ENCODE measurements at regions of chr3 and their contacts with region 1.

Region 1: DNA sequence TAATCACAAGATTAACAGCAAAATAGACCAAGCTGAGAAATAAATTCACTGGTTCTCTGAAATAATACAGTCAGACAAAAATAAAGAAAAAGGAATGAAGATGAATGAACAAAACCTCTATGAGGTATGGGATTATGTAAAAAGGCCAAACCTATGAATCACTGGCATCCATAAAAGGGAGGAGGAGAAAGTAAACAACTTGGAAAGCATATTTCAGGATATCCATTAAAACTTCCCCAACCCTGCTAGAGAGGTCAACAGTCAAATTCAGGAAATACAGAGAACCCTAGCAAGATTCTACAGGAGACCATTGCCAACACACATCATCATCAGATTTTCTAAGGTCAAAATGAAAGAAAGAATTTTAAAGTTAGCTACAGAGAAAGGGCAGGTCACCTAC is 649.7 kb upstream of the CBLB start:
- DNase-seq: no peak
- ATAC-seq: no peak
- H3K4me3 ChIP-seq: no peak overlapping the region
- H3K27ac ChIP-seq: no peak overlapping the region
- H3K4me1 ChIP-seq: no peaks in the 10 kb centered on the region
- H3K27me3 ChIP-seq: no peaks in the 10 kb centered on the region
- CTCF ChIP-seq: no peak

Region 2: GRCh38 chr3:106232956-106233355 is 285.6 kb before region 1 on chr3:
- CTCF ChIA-PET with region 1: no interaction called
- POLR2A ChIA-PET with region 1: no interaction called
- in situ Hi-C with region 1: no loop called
- intact Hi-C with region 1: no loop called
- DNase-seq: no peak
- ATAC-seq: no peak
- H3K4me3 ChIP-seq: no peak overlapping the region
- H3K27ac ChIP-seq: no peak overlapping the region
- H3K4me1 ChIP-seq: no peaks in the 10 kb centered on the region
- H3K27me3 ChIP-seq: no peaks in the 10 kb centered on the region
- CTCF ChIP-seq: no peak

Region 3: GRCh38 chr3:106392915-106393314 is 125.6 kb before region 1 on chr3:
- CTCF ChIA-PET with region 1: no interaction called
- POLR2A ChIA-PET with region 1: interaction called, 10 read pairs
- in situ Hi-C with region 1: no loop called
- intact Hi-C with region 1: no loop called
- DNase-seq: no peak
- ATAC-seq: no peak
- H3K4me3 ChIP-seq: no peak overlapping the region
- H3K27ac ChIP-seq: no peak overlapping the region
- H3K4me1 ChIP-seq: no peaks in the 10 kb centered on the region
- H3K27me3 ChIP-seq: no peaks in the 10 kb centered on the region
- CTCF ChIP-seq: no peak

Measured in Panc1 (cell line).